Sciatic nerve (tissue), 2 donors: ENCODE measurements at regions of chr18 and their contacts with region 1.

Region 1: DNA sequence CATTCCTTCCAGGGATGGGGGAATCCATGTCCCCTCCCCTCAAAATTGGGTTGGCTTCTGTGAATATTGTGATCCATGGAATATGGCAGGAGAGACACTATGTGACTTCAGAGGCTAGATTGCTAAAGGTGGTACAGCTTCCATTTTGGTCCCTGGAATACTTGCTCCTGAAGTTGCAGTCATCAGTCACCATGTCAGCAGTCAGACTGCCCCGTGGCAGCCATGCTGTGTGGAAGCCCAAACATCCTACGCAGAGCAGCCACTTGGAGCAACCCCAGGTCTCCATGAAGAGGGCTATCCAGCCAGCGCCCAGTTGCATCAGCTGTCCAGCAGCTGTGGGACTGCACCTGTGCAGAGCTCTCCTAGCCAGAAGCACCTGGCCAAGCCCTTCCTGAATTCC is 15.8 kb upstream of the KDSR start:
- DNase-seq: no peak
- ATAC-seq: no peak

Region 2: DNA sequence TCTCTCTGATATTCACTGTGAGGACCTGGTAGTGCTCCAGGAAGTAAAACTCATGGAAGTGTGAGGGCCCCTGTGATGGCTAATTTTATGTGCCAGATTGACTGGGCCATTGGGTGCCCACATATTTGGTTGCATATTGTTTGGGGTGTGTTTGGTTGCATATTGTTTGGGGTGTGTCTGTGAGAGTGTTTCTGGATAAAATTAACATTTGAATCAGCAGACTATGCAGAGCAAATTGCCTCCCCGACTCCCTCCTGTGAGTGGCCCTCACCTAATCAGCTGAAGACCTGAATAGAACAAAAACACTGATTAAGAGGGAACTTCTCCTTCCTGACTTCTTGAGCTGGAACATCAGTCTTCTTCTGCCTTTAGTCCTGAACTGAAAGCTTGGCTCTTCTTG is 939.3 kb after region 1 on chr18:
- intact Hi-C with region 1: loop called (anchors 5 kb)
- DNase-seq: no peak
- ATAC-seq: no peak